ENCODE measurements at regions of chr6 and their contacts with region 1.

Region 1: GRCh38 chr6:43096451-43097097 is 20.5 kb downstream of the PTK7 start:
- DNase-seq: peak in 2 of 4 experiments; percentile 42 to 43
- ATAC-seq: peak; percentile 58
- H3K4me3 ChIP-seq: no peak overlapping the region
- H3K27ac ChIP-seq: peak overlapping the region; percentile 4; the same call in 2 of the 3 replicates
- H3K4me1 ChIP-seq: peaks cover 22 to 27% of the 10 kb centered on the region in 2 experiments
- H3K27me3 ChIP-seq: no peaks in the 10 kb centered on the region
- CTCF ChIP-seq: no peak
- EP300 ChIP-seq: no peak
- POLR2A ChIP-seq: no peak
- RAD21 ChIP-seq: no peak

Region 2: GRCh38 chr6:43113431-43114260 is 17.1 kb after region 1 on chr6:
- CTCF ChIA-PET with region 1: no interaction called
- POLR2A ChIA-PET with region 1: interaction called, 11 read pairs
- in situ Hi-C with region 1: no loop called
- intact Hi-C with region 1: no loop called
- DNase-seq: peak in 2 of 4 experiments; percentile 22 to 39
- ATAC-seq: peak; percentile 67
- H3K4me3 ChIP-seq: no peak overlapping the region
- H3K27ac ChIP-seq: peak overlapping the region; percentile 70
- H3K4me1 ChIP-seq: peaks cover 25 to 26% of the 10 kb centered on the region in 2 experiments
- H3K27me3 ChIP-seq: no peaks in the 10 kb centered on the region
- CTCF ChIP-seq: no peak
- EP300 ChIP-seq: no peak
- POLR2A ChIP-seq: no peak
- RAD21 ChIP-seq: no peak

Region 3: DNA sequence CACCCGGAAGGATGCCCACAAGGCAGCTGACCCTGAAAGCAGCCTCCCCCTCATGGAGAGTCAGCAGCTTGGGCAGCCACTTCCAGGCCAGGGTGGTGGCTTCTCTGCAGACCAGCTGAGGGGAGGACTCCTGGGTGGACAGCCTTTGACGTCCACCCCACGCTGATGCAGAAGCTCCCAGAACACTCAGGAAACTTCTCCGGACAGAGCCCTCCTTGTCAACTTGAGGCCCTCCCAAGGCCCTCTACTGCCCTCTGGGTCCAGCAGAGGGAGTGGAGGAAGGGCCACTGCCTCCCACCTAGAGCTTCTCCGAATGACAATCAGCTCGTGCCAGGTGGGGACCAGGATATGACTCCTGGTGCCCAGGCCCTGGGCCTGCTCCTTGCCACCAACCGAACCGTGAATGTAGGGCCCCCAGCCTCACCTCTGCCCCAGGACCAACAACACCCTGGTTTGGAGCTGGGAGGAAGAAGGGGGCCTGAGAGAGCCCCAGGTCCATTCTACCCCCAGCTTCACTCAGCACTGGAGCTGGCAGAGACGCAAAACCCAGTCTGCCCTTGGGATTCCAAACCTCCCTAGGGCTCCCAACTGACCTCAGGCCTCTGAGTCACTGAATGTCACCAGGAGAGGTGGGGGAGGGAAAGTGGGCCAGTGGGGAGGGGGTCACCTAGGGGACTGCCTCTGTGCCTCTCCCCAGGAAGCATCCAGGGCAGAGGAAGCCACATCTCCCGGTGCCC is 190.6 kb after region 1 on chr6:
- CTCF ChIA-PET with region 1: no interaction called
- POLR2A ChIA-PET with region 1: no interaction called
- in situ Hi-C with region 1: no loop called
- intact Hi-C with region 1: no loop called
- DNase-seq: peak; percentile 45 to 62 (median 50)
- ATAC-seq: peak; percentile 86
- H3K4me3 ChIP-seq: no peak overlapping the region
- H3K27ac ChIP-seq: no peak overlapping the region
- H3K4me1 ChIP-seq: peaks cover 0 to 24% of the 10 kb centered on the region in 2 experiments; a peak in 2 of 5 replicates
- H3K27me3 ChIP-seq: peaks cover 36 to 58% of the 10 kb centered on the region in 2 experiments
- CTCF ChIP-seq: peak; percentile 60 to 71 (median 61)
- EP300 ChIP-seq: no peak
- POLR2A ChIP-seq: no peak
- RAD21 ChIP-seq: peak; percentile 14 to 53; a peak in 2 of 4 replicates

Measured in K562 (cell line).